ENCODE measurements at regions of chr3 and their contacts with region 1.

Region 1: GRCh38 chr3:124761250-124761796 is 31.1 kb downstream of the UMPS start:
- DNase-seq: peak; percentile 55
- H3K4me3 Mint-ChIP-seq: no peak overlapping the region
- H3K27ac Mint-ChIP-seq: peak overlapping the region; percentile 25
- H3K4me1 Mint-ChIP-seq: peaks cover 22% of the 10 kb centered on the region
- H3K27me3 Mint-ChIP-seq: peaks cover 4% of the 10 kb centered on the region

Region 2: GRCh38 chr3:124634210-124635168 is 126.8 kb before region 1 on chr3:
- intact Hi-C with region 1: no loop called
- DNase-seq: no peak
- H3K4me3 Mint-ChIP-seq: no peak overlapping the region
- H3K27ac Mint-ChIP-seq: no peak overlapping the region
- H3K4me1 Mint-ChIP-seq: peaks cover 31% of the 10 kb centered on the region
- H3K27me3 Mint-ChIP-seq: peaks cover 57% of the 10 kb centered on the region

Region 3: DNA sequence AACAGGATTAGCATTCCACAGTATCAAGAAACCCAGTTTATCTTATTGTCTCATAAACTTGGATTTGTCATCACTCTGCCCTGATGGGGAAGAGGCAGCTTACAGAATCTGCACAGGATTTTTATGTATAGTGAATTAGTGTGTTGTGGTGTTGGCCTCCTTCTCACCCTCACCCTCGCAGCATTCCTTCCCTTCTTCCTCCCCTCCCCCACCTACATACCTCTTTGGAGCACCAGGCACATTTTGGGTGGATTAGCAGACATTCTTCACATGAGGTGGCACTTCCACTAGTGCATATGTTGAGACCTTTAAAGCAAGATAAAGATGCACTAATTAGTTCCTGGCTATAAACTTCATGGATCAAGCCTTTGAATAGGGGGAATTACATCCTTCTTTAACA is 111.9 kb after region 1 on chr3:
- intact Hi-C with region 1: no loop called
- DNase-seq: no peak
- H3K4me3 Mint-ChIP-seq: no peak overlapping the region
- H3K27ac Mint-ChIP-seq: no peak overlapping the region
- H3K4me1 Mint-ChIP-seq: no peaks in the 10 kb centered on the region
- H3K27me3 Mint-ChIP-seq: peaks cover 34% of the 10 kb centered on the region

Region 4: DNA sequence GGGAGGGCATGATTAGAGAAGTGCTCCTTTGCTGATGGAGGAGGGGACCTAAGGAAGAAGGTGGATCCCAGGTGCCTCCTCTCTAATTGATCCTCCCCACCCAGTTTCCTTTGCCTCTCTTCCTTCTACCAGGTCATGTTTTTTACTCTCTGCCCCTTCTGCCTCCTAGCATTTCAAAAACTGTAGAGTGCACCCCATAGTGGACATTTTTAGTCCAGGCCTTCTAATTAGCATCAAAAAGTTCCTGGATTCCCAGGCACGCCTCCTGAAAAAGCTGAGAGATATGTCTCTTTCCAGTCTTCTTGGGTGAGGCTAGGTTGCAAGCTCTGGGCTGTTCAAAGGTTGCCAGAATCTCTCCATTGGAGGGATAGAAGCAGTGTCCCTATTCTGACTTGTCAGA is 144.5 kb after region 1 on chr3:
- intact Hi-C with region 1: loop called (anchors 1 kb)
- DNase-seq: no peak
- H3K4me3 Mint-ChIP-seq: no peak overlapping the region
- H3K27ac Mint-ChIP-seq: no peak overlapping the region
- H3K4me1 Mint-ChIP-seq: peaks cover 4% of the 10 kb centered on the region
- H3K27me3 Mint-ChIP-seq: peaks cover 23% of the 10 kb centered on the region

Region 5: DNA sequence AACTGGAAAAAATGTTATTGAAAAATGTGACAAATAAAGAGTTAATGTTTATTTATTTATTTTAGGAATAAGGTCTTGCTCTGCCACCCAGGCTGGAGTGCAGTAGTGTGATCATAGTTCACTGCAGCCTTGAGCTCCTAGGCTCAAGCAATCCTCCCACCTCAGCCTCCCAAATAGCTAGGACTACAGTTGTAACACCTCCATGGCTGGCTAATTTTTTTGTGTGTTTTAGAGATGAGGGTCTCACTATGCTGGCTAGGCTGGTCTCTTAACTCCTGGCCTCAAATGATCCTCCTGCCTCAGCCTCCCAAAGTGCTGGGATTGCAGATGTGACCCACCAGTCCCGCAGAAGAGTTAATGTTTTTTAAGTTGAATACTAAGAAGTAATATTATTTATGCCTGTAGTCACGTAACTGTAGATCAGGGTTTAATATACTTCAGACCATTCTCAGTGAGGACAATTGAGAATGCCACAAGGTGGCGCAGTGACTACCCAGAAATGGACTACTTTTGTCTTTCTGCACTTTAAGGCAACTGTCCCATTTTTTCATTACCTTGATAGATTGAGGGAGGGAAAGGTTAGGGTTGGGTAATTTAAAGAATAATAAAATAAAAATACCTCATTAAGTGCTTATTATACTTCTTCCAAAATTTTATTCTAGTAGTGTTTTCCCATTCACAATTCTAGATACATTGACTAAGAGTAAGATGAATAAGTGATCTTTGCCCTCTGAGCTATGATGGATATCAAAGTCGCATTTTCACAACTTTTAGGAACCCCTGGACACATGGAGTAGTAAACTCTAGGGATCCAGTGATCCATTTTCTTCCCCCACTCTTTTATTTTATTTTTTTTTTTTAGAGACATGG is 167.2 kb after region 1 on chr3:
- intact Hi-C with region 1: loop called (anchors 1 kb)
- DNase-seq: peak; percentile 33
- H3K4me3 Mint-ChIP-seq: no peak overlapping the region
- H3K27ac Mint-ChIP-seq: no peak overlapping the region
- H3K4me1 Mint-ChIP-seq: no peaks in the 10 kb centered on the region
- H3K27me3 Mint-ChIP-seq: peaks cover 45% of the 10 kb centered on the region

Region 6: GRCh38 chr3:125202197-125202596 is 440.9 kb after region 1 on chr3:
- intact Hi-C with region 1: loop called (anchors 10 kb)
- DNase-seq: no peak
- H3K4me3 Mint-ChIP-seq: no peak overlapping the region
- H3K27ac Mint-ChIP-seq: no peak overlapping the region
- H3K4me1 Mint-ChIP-seq: no peaks in the 10 kb centered on the region
- H3K27me3 Mint-ChIP-seq: peaks cover 28% of the 10 kb centered on the region

Region 7: DNA sequence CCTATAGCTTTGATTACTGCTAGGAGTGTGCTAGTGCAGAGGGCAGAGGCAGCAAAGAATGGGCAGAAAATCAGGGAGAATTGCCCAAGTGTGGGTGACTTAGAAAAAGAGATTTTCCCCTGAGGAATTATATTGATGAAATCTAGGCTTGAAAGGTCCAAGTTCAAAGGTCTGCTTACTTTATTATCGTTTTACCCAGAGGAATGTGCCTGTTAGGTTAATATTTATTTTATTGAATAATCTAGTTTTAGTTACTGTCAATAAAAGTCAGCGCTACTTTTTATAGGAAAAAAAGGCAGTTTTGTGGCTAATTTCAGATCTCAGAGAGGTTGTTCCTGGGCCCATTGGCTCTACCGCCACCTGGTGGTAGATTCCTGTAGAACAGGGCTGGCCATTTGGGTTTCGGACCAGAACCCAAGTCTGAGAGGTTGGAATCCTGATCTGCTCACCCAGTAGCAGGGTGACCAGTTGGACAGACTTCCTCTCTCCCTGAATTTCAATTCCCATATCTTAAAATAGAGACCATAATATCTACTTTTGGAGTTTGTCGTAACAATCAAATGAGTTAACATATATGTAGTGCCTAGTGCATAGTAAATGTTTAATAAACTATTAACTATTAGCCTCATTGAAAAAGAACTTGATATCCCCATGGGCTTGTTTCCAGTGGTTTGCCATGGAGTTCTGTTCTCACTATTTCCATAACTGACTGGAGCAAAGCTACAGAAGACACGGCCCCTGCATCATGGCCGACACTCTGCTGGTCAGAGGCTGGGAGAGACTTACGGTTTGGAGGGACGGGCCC is 676.5 kb after region 1 on chr3:
- intact Hi-C with region 1: loop called (anchors 2 kb)
- DNase-seq: peak; percentile 37
- H3K4me3 Mint-ChIP-seq: no peak overlapping the region
- H3K27ac Mint-ChIP-seq: no peak overlapping the region
- H3K4me1 Mint-ChIP-seq: no peaks in the 10 kb centered on the region
- H3K27me3 Mint-ChIP-seq: peaks cover 2% of the 10 kb centered on the region

Region 8: DNA sequence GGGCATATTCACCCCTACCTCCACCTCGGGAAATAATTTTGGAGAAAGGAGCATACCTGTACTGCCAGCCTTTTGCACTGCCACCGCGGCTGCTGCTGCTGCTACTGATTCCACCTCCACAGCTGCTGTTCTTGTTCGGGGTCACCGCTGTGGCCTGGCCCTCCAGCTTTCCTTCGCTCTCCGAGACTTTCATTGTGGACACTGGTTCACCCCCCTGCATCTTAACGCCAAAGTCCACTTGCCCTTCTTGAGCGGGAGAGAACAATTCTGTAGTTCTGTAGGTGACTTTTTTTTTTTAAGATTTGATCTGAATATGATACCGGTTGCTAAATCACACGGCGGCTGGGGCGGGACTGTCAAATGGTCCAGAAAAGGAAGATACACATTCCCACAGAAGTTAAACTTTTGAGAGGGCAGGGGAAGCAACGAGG is 833.3 kb after region 1 on chr3:
- intact Hi-C with region 1: loop called (anchors 5 kb)
- DNase-seq: peak; percentile 1
- H3K4me3 Mint-ChIP-seq: peak overlapping the region; percentile 95
- H3K27ac Mint-ChIP-seq: peak overlapping the region; percentile 88
- H3K4me1 Mint-ChIP-seq: peaks cover 28% of the 10 kb centered on the region
- H3K27me3 Mint-ChIP-seq: no peaks in the 10 kb centered on the region

Measured in activated T-helper 1 cell treated with anti-CD3 and anti-CD28 coated beads, Interleukin-12 subunit alpha, Interleukin-12 subunit beta, Interleukin-2, Interleukin-4 antibody, amounts not matched to agents 30 ng/mL and 10 ng/mL and 1 ng/mL, durations not matched to agents 14 hours and 24 hours and 36 hours (primary cell).